Spleen (tissue), 13 donors: ENCODE measurements at regions of chr10 and their contacts with region 1.

Region 1: GRCh38 chr10:42872865-42873643 is 90.5 kb downstream of the BMS1 start:
- DNase-seq: no peak
- H3K4me3 ChIP-seq: no peak overlapping the region
- H3K27ac ChIP-seq: no peak overlapping the region
- H3K4me1 ChIP-seq: peaks cover 0 to 35% (median 14%) of the 10 kb centered on the region in 6 donors
- H3K27me3 ChIP-seq: peaks cover 0 to 13% (median 0%) of the 10 kb centered on the region in 7 donors
- CTCF ChIP-seq: no peak
- POLR2A ChIP-seq: no peak

Region 2: DNA sequence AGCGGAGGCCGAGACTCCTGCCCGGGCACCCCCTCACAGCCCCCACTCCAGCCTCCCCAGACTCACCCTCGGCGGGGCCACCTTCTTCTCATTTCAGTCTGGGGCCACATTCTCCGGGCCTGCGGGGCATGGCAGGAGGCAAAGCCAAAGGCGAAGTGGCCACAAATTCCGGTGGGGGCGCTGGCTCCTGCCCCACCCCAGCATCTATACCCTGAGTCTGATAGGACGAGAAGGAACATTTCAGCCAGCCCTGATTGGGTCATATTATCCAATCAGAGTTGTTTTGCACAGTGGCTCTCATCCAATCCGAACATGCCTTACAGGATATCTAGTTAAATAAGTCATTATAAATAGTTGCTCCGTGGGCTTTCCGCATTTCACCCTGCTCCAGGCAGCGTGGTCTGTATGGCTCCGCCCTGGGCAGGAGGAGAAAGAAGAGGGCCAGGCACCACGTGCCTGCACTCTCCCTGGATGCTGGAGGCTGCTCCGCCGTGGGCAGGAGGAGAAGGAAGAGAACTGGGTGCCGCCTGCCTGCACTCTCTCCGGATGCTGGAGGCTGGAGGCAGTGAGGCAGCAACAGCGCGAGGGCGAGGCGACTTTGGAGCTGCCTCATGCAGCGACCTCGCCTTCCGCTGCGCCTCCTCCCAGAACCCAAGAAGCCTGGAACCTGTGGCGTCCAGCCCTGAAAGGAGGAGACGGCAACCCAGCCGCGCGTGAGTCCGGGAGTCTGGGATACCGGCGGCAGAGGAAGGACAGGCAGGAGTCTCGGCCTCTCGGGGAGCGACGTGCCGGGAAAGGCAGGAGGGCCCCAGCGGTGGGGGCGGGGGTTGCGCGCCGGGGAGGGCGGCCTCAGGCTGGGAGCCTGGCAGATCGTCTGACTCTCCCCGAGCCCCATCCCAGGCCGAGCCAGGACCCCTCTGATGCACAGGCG is 397.6 kb before region 1 on chr10:
- intact Hi-C with region 1: no loop called
- DNase-seq: peak; percentile 77
- H3K4me3 ChIP-seq: peak overlapping the region; percentile 24 to 64 (median 40)
- H3K27ac ChIP-seq: peak overlapping the region in 7 of 8 donors; percentile 11 to 73 (median 53)
- H3K4me1 ChIP-seq: no peaks in the 10 kb centered on the region
- H3K27me3 ChIP-seq: peaks cover 0 to 18% (median 9%) of the 10 kb centered on the region in 7 donors
- CTCF ChIP-seq: peak in 2 of 11 experiments; percentile 13 to 22
- POLR2A ChIP-seq: no peak

Region 3: GRCh38 chr10:42615419-42615818 is 257.6 kb before region 1 on chr10:
- intact Hi-C with region 1: no loop called
- DNase-seq: no peak
- H3K4me3 ChIP-seq: no peak overlapping the region
- H3K27ac ChIP-seq: no peak overlapping the region
- H3K4me1 ChIP-seq: no peaks in the 10 kb centered on the region
- H3K27me3 ChIP-seq: no peaks in the 10 kb centered on the region
- CTCF ChIP-seq: no peak
- POLR2A ChIP-seq: no peak

Region 4: GRCh38 chr10:43105102-43105785 is 232.2 kb after region 1 on chr10:
- intact Hi-C with region 1: loop called (anchors 5 kb)
- DNase-seq: peak; percentile 95
- H3K4me3 ChIP-seq: peak overlapping the region; percentile 40 to 75 (median 61)
- H3K27ac ChIP-seq: peak overlapping the region in 1 of 8 donors; percentile 33
- H3K4me1 ChIP-seq: peaks cover 11 to 34% (median 25%) of the 10 kb centered on the region in 6 donors
- H3K27me3 ChIP-seq: peaks cover 0 to 46% (median 21%) of the 10 kb centered on the region in 7 donors
- CTCF ChIP-seq: peak; percentile 97 to 100 (median 99)
- POLR2A ChIP-seq: no peak

Region 5: DNA sequence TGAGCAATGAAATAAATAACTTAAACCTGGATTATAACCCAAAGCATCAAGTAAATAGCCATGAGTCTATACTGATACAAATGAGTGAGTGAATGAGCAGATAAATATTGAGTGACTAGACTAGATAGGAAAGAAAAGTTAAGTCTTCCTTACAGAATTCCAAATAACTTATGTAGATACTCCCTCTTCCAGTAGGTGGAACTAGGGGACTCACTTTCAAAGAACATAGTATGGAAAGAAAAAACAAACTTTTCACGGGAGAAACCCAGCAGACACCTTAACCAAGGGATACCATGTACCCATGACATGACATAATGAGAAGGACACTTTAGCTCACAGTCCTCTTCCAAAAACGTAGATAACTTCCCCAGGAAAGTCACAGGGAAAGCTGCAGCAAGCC is 297.4 kb after region 1 on chr10:
- intact Hi-C with region 1: no loop called
- DNase-seq: no peak
- H3K4me3 ChIP-seq: no peak overlapping the region
- H3K27ac ChIP-seq: peak overlapping the region in 5 of 8 donors; percentile 30 to 85 (median 67)
- H3K4me1 ChIP-seq: peaks cover 0 to 69% (median 16%) of the 10 kb centered on the region in 6 donors
- H3K27me3 ChIP-seq: no peaks in the 10 kb centered on the region
- CTCF ChIP-seq: no peak
- POLR2A ChIP-seq: no peak